ENCODE measurements at regions of chr9 and their contacts with region 1.

Region 1: GRCh38 chr9:114487607-114488300 is 17.5 kb downstream of the WHRN start:
- DNase-seq: peak; percentile 89
- H3K4me3 Mint-ChIP-seq: no peak overlapping the region
- H3K27ac Mint-ChIP-seq: no peak overlapping the region
- H3K4me1 Mint-ChIP-seq: peaks cover 22% of the 10 kb centered on the region
- H3K27me3 Mint-ChIP-seq: no peaks in the 10 kb centered on the region
- CTCF ChIP-seq: peak; percentile 83

Region 2: GRCh38 chr9:114434878-114435311 is 52.9 kb before region 1 on chr9:
- CTCF ChIA-PET with region 1: interaction called, 16 read pairs
- POLR2A ChIA-PET with region 1: no interaction called
- intact Hi-C with region 1: loop called (anchors 1 kb)
- DNase-seq: peak; percentile 61
- H3K4me3 Mint-ChIP-seq: no peak overlapping the region
- H3K27ac Mint-ChIP-seq: no peak overlapping the region
- H3K4me1 Mint-ChIP-seq: no peaks in the 10 kb centered on the region
- H3K27me3 Mint-ChIP-seq: no peaks in the 10 kb centered on the region
- CTCF ChIP-seq: peak; percentile 79

Region 3: DNA sequence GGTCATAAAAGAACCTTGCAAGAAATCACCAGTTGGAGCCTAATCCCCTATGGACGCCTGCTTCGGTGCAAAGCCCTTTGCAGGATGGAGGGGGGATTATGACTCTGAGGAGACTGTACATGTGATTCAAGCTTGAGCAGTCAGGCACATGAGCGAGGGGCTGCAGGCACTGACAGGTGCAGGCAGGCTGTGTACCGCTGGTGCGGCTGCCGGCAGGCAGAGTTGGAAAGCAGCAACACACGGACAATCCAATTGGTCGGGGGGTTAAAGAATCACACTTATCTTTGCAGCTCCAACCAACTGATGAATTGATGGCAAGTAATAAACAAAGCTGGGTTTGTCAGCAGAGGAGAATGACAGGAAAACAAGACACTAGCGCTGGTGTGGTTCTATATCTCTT is 11.8 kb after region 1 on chr9:
- CTCF ChIA-PET with region 1: interaction called, 20 read pairs
- POLR2A ChIA-PET with region 1: interaction called, 37 read pairs
- intact Hi-C with region 1: loop called (anchors 1 kb)
- DNase-seq: no peak
- H3K4me3 Mint-ChIP-seq: no peak overlapping the region
- H3K27ac Mint-ChIP-seq: no peak overlapping the region
- H3K4me1 Mint-ChIP-seq: peaks cover 27% of the 10 kb centered on the region
- H3K27me3 Mint-ChIP-seq: no peaks in the 10 kb centered on the region
- CTCF ChIP-seq: no peak

Region 4: GRCh38 chr9:114538241-114538640 is 50.5 kb after region 1 on chr9:
- CTCF ChIA-PET with region 1: no interaction called
- POLR2A ChIA-PET with region 1: no interaction called
- intact Hi-C with region 1: no loop called
- DNase-seq: peak; percentile 34
- H3K4me3 Mint-ChIP-seq: no peak overlapping the region
- H3K27ac Mint-ChIP-seq: no peak overlapping the region
- H3K4me1 Mint-ChIP-seq: no peaks in the 10 kb centered on the region
- H3K27me3 Mint-ChIP-seq: no peaks in the 10 kb centered on the region
- CTCF ChIP-seq: no peak

Region 5: GRCh38 chr9:114551883-114552685 is 64.3 kb after region 1 on chr9:
- CTCF ChIA-PET with region 1: interaction called, 5 read pairs
- POLR2A ChIA-PET with region 1: no interaction called
- intact Hi-C with region 1: loop called (anchors 1 kb)
- DNase-seq: peak; percentile 97
- H3K4me3 Mint-ChIP-seq: no peak overlapping the region
- H3K27ac Mint-ChIP-seq: peak overlapping the region; percentile 91
- H3K4me1 Mint-ChIP-seq: peaks cover 18% of the 10 kb centered on the region
- H3K27me3 Mint-ChIP-seq: peaks cover 8% of the 10 kb centered on the region
- CTCF ChIP-seq: no peak

Region 6: DNA sequence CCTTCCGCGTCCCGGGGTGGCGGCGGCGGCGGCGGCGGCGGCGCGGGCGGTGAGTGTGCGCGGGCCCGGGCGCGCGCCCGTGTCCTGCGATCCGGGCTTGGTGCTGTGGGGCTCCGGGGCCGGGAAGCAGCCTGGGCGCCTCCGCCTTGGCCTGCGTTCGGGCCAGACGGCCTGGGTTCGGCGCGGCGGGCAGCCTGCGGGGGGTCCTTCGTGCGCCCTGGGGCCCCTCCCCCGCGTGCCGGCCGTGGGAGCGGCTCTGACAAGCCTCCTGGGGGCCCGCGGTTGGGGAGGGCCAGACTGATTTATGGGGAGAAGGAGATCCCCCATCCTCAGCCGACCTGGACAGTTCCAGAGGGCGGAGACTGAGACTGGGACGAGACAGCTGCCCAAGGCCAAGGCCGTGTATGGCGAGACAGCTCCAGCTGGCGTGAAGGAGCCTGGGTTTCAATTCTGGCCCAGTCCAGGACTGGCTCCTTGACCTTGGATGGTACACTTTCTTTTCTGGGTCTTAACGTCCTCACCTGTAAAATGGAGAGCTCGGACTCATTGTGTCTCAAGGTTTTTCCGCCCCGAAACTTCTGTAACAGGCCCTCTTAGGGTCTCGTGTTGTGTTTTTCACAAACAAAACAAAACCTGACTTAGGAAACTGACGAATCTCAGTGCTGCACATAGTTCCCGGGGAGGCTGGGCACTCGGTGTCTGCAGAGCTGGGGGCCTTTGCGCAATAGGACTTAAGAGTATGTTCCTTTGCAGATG is 123.9 kb after region 1 on chr9:
- CTCF ChIA-PET with region 1: interaction called, 3 read pairs
- POLR2A ChIA-PET with region 1: interaction called, 5 read pairs
- intact Hi-C with region 1: loop called (anchors 1 kb)
- DNase-seq: peak; percentile 61
- H3K4me3 Mint-ChIP-seq: peak overlapping the region; percentile 80
- H3K27ac Mint-ChIP-seq: peak overlapping the region; percentile 71
- H3K4me1 Mint-ChIP-seq: peaks cover 19% of the 10 kb centered on the region
- H3K27me3 Mint-ChIP-seq: no peaks in the 10 kb centered on the region
- CTCF ChIP-seq: no peak